ENCODE measurements at regions of chr4 and their contacts with region 1.

Region 1: GRCh38 chr4:13548984-13549546 is 4.8 kb upstream of the NKX3-2 start:
- DNase-seq: no peak
- H3K4me3 ChIP-seq: peak overlapping the region in 2 of 4 donors; percentile 35 to 54
- H3K27ac ChIP-seq: no peak overlapping the region
- H3K4me1 ChIP-seq: peaks cover 27 to 48% (median 30%) of the 10 kb centered on the region in 3 donors
- H3K27me3 ChIP-seq: peaks cover 24 to 87% (median 46%) of the 10 kb centered on the region in 4 donors
- CTCF ChIP-seq: peak; percentile 76 to 90 (median 85)
- POLR2A ChIP-seq: no peak

Region 2: GRCh38 chr4:12852338-12853307 is 696.4 kb before region 1 on chr4:
- intact Hi-C with region 1: loop called (anchors 5 kb)
- DNase-seq: no peak
- H3K4me3 ChIP-seq: no peak overlapping the region
- H3K27ac ChIP-seq: no peak overlapping the region
- H3K4me1 ChIP-seq: peaks cover 0 to 4% (median 0%) of the 10 kb centered on the region in 3 donors
- H3K27me3 ChIP-seq: peaks cover 0 to 24% (median 0%) of the 10 kb centered on the region in 4 donors
- CTCF ChIP-seq: peak in 5 of 6 experiments; percentile 35 to 66 (median 54)
- POLR2A ChIP-seq: no peak

Measured in esophagus squamous epithelium (tissue), 5 donors.